ENCODE measurements at regions of chr14 and their contacts with region 1.

Region 1: GRCh38 chr14:44091652-44092051 is 415.4 kb downstream of the FSCB start:
- DNase-seq: no peak
- ATAC-seq: no peak

Region 2: GRCh38 chr14:44041700-44042099 is 50.0 kb before region 1 on chr14:
- intact Hi-C with region 1: no loop called
- DNase-seq: no peak
- ATAC-seq: no peak

Region 3: GRCh38 chr14:44053422-44053821 is 38.2 kb before region 1 on chr14:
- intact Hi-C with region 1: loop called (anchors 2 kb)
- DNase-seq: no peak
- ATAC-seq: no peak

Measured in sciatic nerve (tissue), 2 donors.